Activated CD8-positive, alpha-beta T cell treated with anti-CD3 and anti-CD28 coated beads for 36 hours (primary cell): ENCODE measurements at regions of chr19 and their contacts with region 1.

Region 1: GRCh38 chr19:45485305-45486077 is 11.4 kb downstream of the RTN2 start:
- DNase-seq: peak; percentile 100
- ATAC-seq: peak; percentile 99
- H3K4me3 Mint-ChIP-seq: peak overlapping the region; percentile 86
- H3K27ac Mint-ChIP-seq: peak overlapping the region; percentile 85
- H3K4me1 Mint-ChIP-seq: peaks cover 14% of the 10 kb centered on the region
- H3K27me3 Mint-ChIP-seq: peaks cover 2% of the 10 kb centered on the region
- CTCF ChIP-seq: peak; percentile 92

Region 2: DNA sequence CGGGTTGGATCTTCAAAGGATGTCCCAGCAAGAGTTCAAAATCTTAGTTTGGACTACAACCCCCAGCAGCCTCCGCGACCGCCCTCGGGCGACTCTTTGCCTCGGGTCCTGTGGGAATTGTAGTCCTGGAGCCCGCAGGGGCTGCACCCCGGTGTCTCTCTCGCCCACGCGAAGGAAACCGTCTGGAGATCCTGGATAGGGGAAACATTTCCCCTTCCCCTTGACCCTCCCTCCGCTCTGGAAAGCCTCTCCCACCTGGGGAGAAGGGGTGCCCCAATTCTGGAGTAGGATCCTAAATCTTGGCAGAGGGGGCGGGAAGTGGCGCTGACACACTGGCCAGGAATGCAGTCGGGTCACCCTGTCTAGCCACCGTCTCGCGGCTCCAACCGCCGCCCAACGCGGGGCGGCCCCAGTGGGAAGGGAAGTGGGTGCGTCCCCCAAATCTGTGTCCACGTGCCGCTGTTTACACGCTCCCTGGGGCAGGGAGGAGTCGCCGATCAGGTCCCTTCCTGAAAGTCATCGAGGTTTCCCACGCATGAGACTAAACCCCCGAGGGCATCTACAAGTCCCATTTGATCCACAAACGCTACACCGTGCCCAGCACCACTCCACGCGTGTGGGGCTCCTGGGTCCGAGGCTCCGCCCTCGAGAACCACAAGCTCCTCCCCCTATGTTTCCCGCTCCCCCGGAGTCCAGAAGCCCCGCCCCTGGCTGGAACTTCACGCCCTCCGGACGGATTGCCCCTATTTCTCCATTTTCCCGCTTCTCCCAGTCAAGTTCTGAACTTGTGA is 79.9 kb before region 1 on chr19:
- CTCF ChIA-PET with region 1: interaction called, 22 read pairs
- POLR2A ChIA-PET with region 1: no interaction called
- intact Hi-C with region 1: no loop called
- DNase-seq: peak; percentile 92
- ATAC-seq: peak; percentile 59
- H3K4me3 Mint-ChIP-seq: peak overlapping the region; percentile 93
- H3K27ac Mint-ChIP-seq: peak overlapping the region; percentile 88
- H3K4me1 Mint-ChIP-seq: peaks cover 36% of the 10 kb centered on the region
- H3K27me3 Mint-ChIP-seq: peaks cover 26% of the 10 kb centered on the region
- CTCF ChIP-seq: no peak

Region 3: DNA sequence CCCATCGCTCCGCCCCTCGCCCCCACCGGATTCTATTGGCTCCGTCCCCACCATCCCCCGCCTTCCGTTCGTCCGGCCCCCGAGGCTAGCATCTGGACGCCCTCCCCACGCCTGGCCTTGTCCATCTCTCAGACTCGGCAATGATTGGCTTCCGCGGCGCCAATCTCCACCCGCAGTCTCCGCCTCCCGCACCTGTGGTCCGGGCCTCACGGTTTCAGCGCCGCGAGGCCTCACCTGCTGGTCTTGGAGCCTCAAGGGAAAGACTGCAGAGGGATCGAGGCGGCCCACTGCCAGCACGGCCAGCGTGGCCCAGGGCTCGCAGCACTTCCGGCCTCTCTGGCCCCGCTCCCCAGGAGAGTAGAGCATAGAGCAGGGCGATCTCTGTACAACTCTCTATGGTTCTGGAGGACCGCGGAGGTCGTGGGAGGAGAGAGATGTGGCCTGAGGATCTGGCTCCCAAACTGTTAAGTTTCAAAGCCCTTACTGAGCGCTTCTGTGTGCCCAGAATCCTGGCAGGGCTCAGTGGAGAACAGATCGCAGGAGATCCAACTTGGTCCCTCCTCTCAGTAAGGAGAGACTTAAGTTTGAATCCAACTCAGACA is 61.8 kb before region 1 on chr19 and contains the start of gene ERCC1:
- CTCF ChIA-PET with region 1: interaction called, 14 read pairs
- POLR2A ChIA-PET with region 1: interaction called, 3 read pairs
- intact Hi-C with region 1: no loop called
- DNase-seq: peak; percentile 89
- ATAC-seq: peak; percentile 74
- H3K4me3 Mint-ChIP-seq: peak within 1 kb of the TSS; percentile 89
- H3K27ac Mint-ChIP-seq: peak within 1 kb of the TSS; percentile 89
- H3K4me1 Mint-ChIP-seq: peaks cover 58% of the 10 kb centered on the region
- H3K27me3 Mint-ChIP-seq: no peaks in the 10 kb centered on the region
- CTCF ChIP-seq: no peak
- total RNA-seq, gene ERCC1: 41.6 to 46.5 TPM

Region 4: DNA sequence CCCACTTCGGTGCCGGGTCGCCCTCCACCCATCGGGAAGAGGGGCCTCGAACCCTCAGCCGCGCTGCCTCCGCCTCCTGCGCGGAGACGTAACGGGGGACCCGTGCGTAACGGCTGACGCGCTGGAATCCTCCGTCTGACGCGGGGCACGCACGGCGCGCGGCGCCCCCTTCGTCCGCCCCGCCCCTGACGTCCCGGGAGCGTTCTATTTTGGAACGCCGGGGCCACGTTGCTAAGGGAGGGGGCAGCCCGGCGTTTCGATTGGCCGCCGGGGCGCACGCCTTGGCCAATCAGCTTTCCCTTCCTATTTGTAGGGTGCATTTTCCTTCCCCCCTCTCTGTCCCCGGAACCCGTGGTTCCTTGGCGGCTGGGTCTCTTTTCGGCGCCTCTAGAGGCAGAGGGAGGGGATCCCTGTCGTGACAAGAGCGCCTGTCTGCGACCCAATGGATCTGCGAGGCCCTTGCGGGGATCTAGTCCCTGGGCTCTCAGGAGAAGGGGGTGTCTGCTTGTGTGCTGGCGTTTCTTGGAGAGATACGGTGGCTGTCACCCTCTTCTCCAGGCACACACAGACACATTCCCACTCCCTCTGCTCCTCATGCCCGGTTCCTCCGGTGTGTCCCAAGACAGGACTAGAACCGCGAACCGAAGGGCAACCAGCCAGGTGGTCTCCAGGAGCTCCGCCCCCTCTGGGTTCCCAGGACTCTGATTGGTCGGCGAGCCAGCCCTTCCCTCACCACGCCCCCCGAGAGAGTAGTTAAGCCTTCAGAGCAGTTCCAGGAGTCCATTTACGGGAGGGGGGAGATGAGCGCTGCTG is 16.2 kb before region 1 on chr19:
- CTCF ChIA-PET with region 1: interaction called, 21 read pairs
- POLR2A ChIA-PET with region 1: interaction called, 3 read pairs
- intact Hi-C with region 1: no loop called
- DNase-seq: peak; percentile 96
- ATAC-seq: peak; percentile 75
- H3K4me3 Mint-ChIP-seq: peak overlapping the region; percentile 86
- H3K27ac Mint-ChIP-seq: peak overlapping the region; percentile 93
- H3K4me1 Mint-ChIP-seq: peaks cover 34% of the 10 kb centered on the region
- H3K27me3 Mint-ChIP-seq: peaks cover 5% of the 10 kb centered on the region
- CTCF ChIP-seq: no peak

Region 5: GRCh38 chr19:45496349-45496953 is 11.0 kb after region 1 on chr19:
- CTCF ChIA-PET with region 1: interaction called, 66 read pairs
- POLR2A ChIA-PET with region 1: interaction called, 4 read pairs
- intact Hi-C with region 1: no loop called
- DNase-seq: peak; percentile 59
- ATAC-seq: peak; percentile 6
- H3K4me3 Mint-ChIP-seq: peak overlapping the region; percentile 28
- H3K27ac Mint-ChIP-seq: no peak overlapping the region
- H3K4me1 Mint-ChIP-seq: peaks cover 35% of the 10 kb centered on the region
- H3K27me3 Mint-ChIP-seq: peaks cover 19% of the 10 kb centered on the region
- CTCF ChIP-seq: no peak

Region 6: GRCh38 chr19:45506246-45506990 is 20.9 kb after region 1 on chr19:
- CTCF ChIA-PET with region 1: interaction called, 23 read pairs
- POLR2A ChIA-PET with region 1: interaction called, 3 read pairs
- intact Hi-C with region 1: no loop called
- DNase-seq: peak; percentile 100
- ATAC-seq: peak; percentile 83
- H3K4me3 Mint-ChIP-seq: peak overlapping the region; percentile 96
- H3K27ac Mint-ChIP-seq: peak overlapping the region; percentile 95
- H3K4me1 Mint-ChIP-seq: peaks cover 33% of the 10 kb centered on the region
- H3K27me3 Mint-ChIP-seq: no peaks in the 10 kb centered on the region
- CTCF ChIP-seq: peak; percentile 45

Region 7: GRCh38 chr19:45523642-45524256 is 38.3 kb after region 1 on chr19:
- CTCF ChIA-PET with region 1: no interaction called
- POLR2A ChIA-PET with region 1: no interaction called
- intact Hi-C with region 1: no loop called
- DNase-seq: peak; percentile 82
- ATAC-seq: peak; percentile 98
- H3K4me3 Mint-ChIP-seq: no peak overlapping the region
- H3K27ac Mint-ChIP-seq: peak overlapping the region; percentile 58
- H3K4me1 Mint-ChIP-seq: peaks cover 14% of the 10 kb centered on the region
- H3K27me3 Mint-ChIP-seq: no peaks in the 10 kb centered on the region
- CTCF ChIP-seq: peak; percentile 79

Region 8: DNA sequence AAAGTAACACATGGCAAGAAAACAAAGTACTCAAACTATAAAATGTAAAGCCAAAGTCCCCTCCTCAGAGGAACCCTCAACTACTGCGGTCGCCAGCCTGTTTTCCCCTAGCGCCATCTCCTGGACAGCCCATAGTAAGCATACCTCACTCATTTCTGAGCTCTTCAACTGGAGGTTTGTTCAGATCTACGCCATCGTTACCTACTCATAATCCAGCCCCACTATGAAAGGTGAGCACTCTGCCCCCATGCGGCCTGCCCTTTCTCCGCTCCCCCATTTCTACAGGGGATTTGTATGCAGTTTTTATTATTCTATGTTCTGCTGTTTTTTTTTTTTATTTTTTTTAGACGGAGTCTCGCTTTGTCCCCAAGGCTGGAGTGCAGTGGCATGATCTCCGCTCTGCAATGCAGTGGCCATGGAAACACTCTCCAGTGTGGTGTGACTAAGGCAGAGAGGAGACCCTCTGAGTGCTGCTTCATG is 72.9 kb after region 1 on chr19:
- CTCF ChIA-PET with region 1: interaction called, 12 read pairs
- POLR2A ChIA-PET with region 1: no interaction called
- intact Hi-C with region 1: no loop called
- DNase-seq: peak; percentile 84
- ATAC-seq: peak; percentile 98
- H3K4me3 Mint-ChIP-seq: no peak overlapping the region
- H3K27ac Mint-ChIP-seq: no peak overlapping the region
- H3K4me1 Mint-ChIP-seq: peaks cover 22% of the 10 kb centered on the region
- H3K27me3 Mint-ChIP-seq: no peaks in the 10 kb centered on the region
- CTCF ChIP-seq: peak; percentile 85

Region 9: DNA sequence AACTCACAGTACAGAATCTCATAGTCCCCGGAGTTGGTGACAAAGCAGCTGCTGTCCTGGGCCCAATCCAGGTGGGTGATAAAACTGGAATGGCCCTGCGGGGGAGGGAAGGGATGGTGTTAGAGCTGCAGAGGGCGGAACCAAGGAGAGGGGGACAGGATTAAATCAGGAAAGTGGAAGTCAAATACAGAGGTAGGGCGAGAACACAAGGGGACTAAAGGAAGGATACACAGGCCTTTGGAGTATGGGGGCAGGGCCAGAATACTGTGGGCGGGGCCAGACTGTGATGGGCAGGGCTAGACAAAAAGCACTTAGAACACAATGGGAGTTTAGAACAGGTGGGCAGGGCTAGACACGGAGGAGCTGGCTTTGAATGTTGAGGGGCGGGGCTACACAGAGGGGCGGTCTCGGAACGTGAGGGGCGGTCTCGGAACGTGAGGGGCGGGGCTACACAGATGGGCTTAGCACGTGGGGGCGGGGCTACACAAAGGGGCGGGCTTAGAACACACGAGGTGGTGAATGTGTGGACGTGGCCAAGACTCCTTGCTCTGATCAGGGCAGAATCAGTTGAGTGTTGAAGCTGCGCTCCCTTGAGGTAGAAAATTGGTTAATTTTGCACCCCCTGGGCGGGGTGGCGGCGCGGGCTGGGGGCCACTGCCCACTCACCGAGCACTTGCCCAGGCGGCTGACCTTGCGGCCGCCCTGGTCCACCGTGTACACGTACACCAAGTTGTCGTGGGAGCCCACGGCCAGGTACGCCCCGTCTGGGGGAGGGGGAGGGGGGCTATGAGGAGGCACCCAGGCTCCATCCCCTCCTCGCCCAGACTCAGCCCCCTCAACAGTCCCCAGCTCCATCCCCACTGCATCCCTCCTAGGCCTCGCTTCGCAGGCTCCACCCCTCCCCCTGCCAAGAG is 130.6 kb after region 1 on chr19:
- CTCF ChIA-PET with region 1: no interaction called
- POLR2A ChIA-PET with region 1: no interaction called
- intact Hi-C with region 1: no loop called
- DNase-seq: peak; percentile 93
- ATAC-seq: peak; percentile 92
- H3K4me3 Mint-ChIP-seq: no peak overlapping the region
- H3K27ac Mint-ChIP-seq: peak overlapping the region; percentile 43
- H3K4me1 Mint-ChIP-seq: peaks cover 23% of the 10 kb centered on the region
- H3K27me3 Mint-ChIP-seq: no peaks in the 10 kb centered on the region
- CTCF ChIP-seq: no peak